Head of caudate nucleus (tissue), 42 donors: ENCODE measurements at regions of chr3 and their contacts with region 1.

Region 1: DNA sequence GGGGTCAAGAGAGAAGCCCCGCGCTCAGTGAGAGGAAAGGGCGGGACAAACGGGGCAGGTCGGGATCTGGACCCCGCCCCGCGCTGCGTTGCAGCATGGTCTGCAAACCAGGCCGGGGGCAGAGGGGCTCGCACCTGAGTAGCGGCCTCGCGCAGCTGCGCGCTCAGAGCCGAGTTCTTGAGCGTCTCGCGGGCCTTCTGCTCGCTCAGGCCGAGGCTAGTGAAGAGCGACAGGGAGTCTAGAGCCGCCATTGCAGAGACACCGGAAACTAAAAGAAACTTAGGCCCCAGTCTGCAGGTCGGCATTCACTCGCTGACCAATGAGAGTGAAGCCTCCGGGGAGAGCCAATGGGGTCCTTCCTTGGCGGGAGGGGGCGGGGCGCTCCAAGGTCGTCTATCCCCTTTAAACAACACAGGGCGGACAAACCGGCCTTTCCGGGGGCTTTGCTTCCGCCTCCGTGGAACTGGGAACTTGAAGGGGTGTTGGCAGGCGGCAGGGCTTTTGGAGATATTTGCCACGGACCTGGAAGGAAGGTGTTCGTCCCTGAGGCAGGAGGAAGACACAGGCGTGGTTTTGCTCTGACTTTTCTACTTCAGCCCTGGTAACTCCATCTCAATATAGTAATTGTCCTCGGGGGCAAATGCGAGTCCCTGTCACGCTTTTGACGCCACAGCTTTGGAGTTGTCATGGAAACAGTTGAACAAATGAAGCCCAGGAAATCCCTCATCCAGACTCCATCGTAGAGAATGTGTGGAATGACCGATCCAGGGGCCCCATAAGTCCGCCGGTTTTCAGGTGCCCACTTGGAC is at the start of gene QARS1:
- DNase-seq: peak; percentile 90 to 97 (median 95)

Region 2: DNA sequence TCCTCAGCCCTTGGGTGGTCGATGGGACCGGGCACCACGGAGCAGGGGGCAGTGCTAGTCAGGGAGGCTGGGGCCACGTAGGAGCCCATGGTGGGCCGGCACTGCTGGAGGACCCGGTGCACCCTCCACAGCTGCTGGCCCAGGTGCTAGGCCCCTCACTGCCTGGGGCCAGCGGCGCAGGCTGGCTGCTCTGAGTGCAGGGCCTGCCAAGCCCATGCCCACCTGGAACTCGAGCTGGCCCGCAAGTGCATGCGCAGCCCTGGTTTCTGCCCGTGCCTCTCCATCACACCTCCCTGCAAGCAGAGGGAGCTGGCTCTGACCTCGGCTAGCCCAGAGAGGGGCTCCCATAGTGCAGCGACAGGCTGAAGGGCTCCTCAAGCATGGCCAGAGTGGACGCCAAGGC is 108.9 kb after region 1 on chr3:
- intact Hi-C with region 1: no loop called
- DNase-seq: no peak

Region 3: DNA sequence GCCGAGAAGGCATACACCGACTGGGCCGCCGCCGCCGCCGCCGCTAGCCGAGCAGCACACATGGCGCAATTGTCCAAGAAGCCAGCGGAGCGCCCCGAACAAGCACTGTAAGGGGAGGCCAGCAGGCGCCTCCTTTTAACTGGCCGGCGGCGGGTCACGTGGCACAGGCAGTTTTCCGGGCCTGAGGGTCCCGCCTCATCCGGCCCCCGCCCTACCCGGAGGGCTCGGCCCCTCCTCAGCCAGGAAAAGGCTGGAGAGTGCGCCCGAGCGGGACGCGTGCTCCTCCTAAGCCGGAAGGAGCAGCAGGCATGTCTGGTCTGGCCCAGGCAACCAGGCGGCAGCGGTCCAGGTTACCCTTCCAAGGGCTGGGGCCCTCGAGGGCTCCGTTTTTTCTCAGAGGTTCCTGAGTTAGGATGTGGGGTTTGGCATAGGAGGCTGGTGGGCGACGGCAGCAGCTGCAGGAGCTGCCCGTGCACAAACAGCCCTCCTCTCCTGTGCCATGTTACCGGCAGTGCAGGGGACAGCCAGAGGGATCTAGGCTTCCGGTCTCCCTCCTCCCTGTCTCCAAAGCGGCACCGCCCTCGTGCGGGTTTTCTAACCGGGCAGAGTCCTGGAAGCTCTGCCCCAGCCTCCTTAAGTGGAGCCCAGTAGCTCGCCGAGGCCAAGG is 253.7 kb after region 1 on chr3 and contains the start of gene GPX1:
- intact Hi-C with region 1: loop called (anchors 10 kb)
- DNase-seq: peak; percentile 86 to 96 (median 92)